Astrocyte of the cerebellum (primary cell): ENCODE measurements at regions of chr1 and their contacts with region 1.

Region 1: GRCh38 chr1:25111706-25112105 is 120.6 kb downstream of the SYF2 start:
- DNase-seq: no peak
- H3K4me3 ChIP-seq: no peak overlapping the region
- CTCF ChIP-seq: no peak

Region 2: DNA sequence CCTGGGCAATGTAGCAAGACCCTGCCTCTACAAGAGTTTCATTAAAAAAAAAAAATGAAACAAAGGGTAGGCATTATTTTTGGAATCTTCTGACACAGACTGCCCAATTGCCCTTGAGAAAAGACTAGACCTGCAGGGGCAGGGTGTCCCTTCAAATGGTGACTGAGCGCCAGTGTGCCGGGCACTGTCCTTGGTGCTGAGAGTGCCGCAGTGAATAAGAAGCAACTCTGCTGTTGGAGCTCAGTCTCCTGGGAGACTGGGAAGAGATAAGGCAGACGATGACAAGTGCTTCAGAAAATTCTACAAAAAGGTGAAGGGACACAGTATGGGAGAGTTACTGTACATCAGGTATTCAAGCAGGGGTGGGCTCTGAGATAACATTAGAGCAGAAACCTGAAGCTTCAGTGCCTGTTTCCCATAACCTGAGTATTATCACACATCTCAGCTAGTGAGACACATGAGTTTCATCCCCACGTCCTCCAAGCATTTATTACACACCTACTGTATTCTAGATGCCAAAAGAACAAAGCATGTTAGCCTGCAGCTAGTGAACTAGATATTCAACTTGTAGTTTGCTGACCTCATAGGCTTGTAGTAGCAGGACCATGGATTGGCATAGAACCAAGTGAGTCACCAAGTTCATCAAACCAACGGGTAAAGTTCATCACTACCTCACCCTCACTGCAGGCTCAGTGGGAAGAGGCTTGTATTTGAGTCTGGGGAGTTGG is 1438.5 kb before region 1 on chr1:
- in situ Hi-C with region 1: no loop called
- DNase-seq: peak; percentile 13
- H3K4me3 ChIP-seq: no peak overlapping the region
- CTCF ChIP-seq: no peak

Region 3: GRCh38 chr1:25148673-25149300 is 37.1 kb after region 1 on chr1:
- in situ Hi-C with region 1: loop called (anchors 5 kb)
- DNase-seq: no peak
- H3K4me3 ChIP-seq: no peak overlapping the region
- CTCF ChIP-seq: peak; percentile 8